ENCODE measurements at regions of chr15 and their contacts with region 1.

Region 1: DNA sequence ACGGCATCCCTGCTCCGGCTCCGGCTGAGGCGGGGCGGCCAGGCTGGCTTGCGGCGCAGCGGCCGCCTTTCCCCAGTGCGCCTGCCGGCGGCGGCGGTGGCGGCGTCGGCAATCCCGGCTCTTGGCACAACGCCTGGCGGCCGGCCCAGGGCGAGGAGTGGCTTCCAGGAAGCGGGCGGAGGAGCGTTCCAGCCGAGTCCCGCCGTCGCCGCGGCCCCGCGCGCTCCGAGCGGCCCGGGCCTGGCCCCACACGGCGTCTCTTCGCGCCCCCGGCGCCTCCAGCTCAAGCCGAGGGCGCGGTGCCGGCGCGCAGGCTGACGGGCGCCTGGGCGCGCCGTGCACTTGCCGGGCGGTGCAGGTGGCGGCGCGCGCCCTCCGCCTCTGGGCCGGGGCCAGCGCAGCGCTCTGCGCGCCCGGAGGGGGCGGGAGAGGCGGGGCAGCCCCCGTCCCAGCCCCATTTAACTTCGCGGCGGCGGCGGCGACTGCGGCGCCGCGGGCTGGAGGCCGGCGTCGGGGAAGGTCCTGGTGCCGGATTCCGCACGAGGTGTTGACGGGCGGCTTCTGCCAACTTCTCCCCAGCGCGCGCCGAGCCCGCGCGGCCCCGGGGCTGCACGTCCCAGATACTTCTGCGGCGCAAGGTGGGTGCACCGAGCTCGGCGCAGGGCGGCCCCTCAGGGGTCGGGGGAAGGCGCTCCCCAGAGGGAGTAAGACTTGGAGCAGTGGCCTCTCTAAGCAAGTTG is at the start of gene ADAMTSL3:
- DNase-seq: peak; percentile 74
- ATAC-seq: peak; percentile 61
- H3K4me3 ChIP-seq: peak within 1 kb of the TSS; percentile 84
- H3K27ac ChIP-seq: no peak within 1 kb of the TSS; the same call in 1 of the 2 replicates
- H3K4me1 ChIP-seq: peaks cover 45% of the 10 kb centered on the region
- H3K27me3 ChIP-seq: no peaks in the 10 kb centered on the region
- CTCF ChIP-seq: no peak
- total RNA-seq, gene ADAMTSL3: 7.9 and 10.9 TPM in 2 replicates

Region 2: GRCh38 chr15:83475551-83475950 is 178.3 kb before region 1 on chr15:
- CTCF ChIA-PET with region 1: no interaction called
- POLR2A ChIA-PET with region 1: no interaction called
- intact Hi-C with region 1: no loop called
- DNase-seq: peak; percentile 73
- ATAC-seq: peak; percentile 67; the same call in 1 of the 2 replicates
- H3K4me3 ChIP-seq: no peak overlapping the region
- H3K27ac ChIP-seq: no peak overlapping the region
- H3K4me1 ChIP-seq: 0 out of 2 replicates have a peak, but pooled peaks cover 7% of the 10 kb centered on the region
- H3K27me3 ChIP-seq: no peaks in the 10 kb centered on the region
- CTCF ChIP-seq: no peak

Region 3: GRCh38 chr15:83571820-83572707 is 81.7 kb before region 1 on chr15:
- CTCF ChIA-PET with region 1: no interaction called
- POLR2A ChIA-PET with region 1: no interaction called
- intact Hi-C with region 1: loop called (anchors 5 kb)
- DNase-seq: peak; percentile 68
- ATAC-seq: no peak
- H3K4me3 ChIP-seq: no peak overlapping the region
- H3K27ac ChIP-seq: no peak overlapping the region
- H3K4me1 ChIP-seq: peaks cover 6% of the 10 kb centered on the region; the same call in 1 of the 2 replicates
- H3K27me3 ChIP-seq: no peaks in the 10 kb centered on the region
- CTCF ChIP-seq: peak; percentile 79

Region 4: GRCh38 chr15:83734487-83734886 is 80.7 kb after region 1 on chr15:
- CTCF ChIA-PET with region 1: no interaction called
- POLR2A ChIA-PET with region 1: interaction called, 3 read pairs
- intact Hi-C with region 1: loop called (anchors 2 kb)
- DNase-seq: peak; percentile 89
- ATAC-seq: peak; percentile 65
- H3K4me3 ChIP-seq: peak overlapping the region; percentile 33; the same call in 1 of the 2 replicates
- H3K27ac ChIP-seq: peak overlapping the region; percentile 83
- H3K4me1 ChIP-seq: peaks cover 36% of the 10 kb centered on the region
- H3K27me3 ChIP-seq: no peaks in the 10 kb centered on the region
- CTCF ChIP-seq: peak; percentile 40

Region 5: GRCh38 chr15:83837945-83838571 is 184.2 kb after region 1 on chr15:
- CTCF ChIA-PET with region 1: no interaction called
- POLR2A ChIA-PET with region 1: interaction called, 3 read pairs
- intact Hi-C with region 1: loop called (anchors 10 kb)
- DNase-seq: peak; percentile 67
- ATAC-seq: peak; percentile 70
- H3K4me3 ChIP-seq: no peak overlapping the region
- H3K27ac ChIP-seq: no peak overlapping the region
- H3K4me1 ChIP-seq: peaks cover 6% of the 10 kb centered on the region; the same call in 1 of the 2 replicates
- H3K27me3 ChIP-seq: no peaks in the 10 kb centered on the region
- CTCF ChIP-seq: peak; percentile 79

Region 6: DNA sequence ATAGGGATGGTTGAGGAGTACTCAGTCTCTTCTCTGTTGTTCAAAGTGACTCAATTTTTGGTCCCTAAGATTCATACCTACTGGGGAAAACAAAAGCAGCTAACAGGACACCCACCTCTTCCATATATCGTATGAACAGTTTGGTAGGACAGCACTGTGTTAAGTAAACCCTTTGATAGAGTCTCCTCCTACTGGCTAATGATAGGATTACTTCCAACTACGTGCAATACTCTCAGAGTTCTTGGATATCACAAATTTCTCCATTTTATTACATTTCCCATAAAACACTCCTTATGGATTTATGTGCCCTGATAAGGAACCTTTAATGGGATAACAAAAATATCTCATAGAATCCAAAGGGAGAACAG is 381.6 kb after region 1 on chr15:
- CTCF ChIA-PET with region 1: no interaction called
- POLR2A ChIA-PET with region 1: no interaction called
- intact Hi-C with region 1: loop called (anchors 10 kb)
- DNase-seq: peak; percentile 70
- ATAC-seq: peak; percentile 80
- H3K4me3 ChIP-seq: no peak overlapping the region
- H3K27ac ChIP-seq: no peak overlapping the region
- H3K4me1 ChIP-seq: peaks cover 9% of the 10 kb centered on the region
- H3K27me3 ChIP-seq: no peaks in the 10 kb centered on the region
- CTCF ChIP-seq: peak; percentile 67

Measured in PC-3 (cell line).